ENCODE measurements at regions of chr12 and their contacts with region 1.

Region 1: GRCh38 chr12:120356567-120357030 is 12.4 kb downstream of the MSI1 start:
- DNase-seq: no peak
- H3K4me3 ChIP-seq: peak overlapping the region in 1 of 4 donors; percentile 39
- H3K27ac ChIP-seq: no peak overlapping the region
- H3K4me1 ChIP-seq: peaks cover 0 to 11% (median 5%) of the 10 kb centered on the region in 3 donors
- H3K27me3 ChIP-seq: peaks cover 0 to 6% (median 0%) of the 10 kb centered on the region in 4 donors
- CTCF ChIP-seq: peak; percentile 73 to 89 (median 84)
- POLR2A ChIP-seq: no peak

Region 2: DNA sequence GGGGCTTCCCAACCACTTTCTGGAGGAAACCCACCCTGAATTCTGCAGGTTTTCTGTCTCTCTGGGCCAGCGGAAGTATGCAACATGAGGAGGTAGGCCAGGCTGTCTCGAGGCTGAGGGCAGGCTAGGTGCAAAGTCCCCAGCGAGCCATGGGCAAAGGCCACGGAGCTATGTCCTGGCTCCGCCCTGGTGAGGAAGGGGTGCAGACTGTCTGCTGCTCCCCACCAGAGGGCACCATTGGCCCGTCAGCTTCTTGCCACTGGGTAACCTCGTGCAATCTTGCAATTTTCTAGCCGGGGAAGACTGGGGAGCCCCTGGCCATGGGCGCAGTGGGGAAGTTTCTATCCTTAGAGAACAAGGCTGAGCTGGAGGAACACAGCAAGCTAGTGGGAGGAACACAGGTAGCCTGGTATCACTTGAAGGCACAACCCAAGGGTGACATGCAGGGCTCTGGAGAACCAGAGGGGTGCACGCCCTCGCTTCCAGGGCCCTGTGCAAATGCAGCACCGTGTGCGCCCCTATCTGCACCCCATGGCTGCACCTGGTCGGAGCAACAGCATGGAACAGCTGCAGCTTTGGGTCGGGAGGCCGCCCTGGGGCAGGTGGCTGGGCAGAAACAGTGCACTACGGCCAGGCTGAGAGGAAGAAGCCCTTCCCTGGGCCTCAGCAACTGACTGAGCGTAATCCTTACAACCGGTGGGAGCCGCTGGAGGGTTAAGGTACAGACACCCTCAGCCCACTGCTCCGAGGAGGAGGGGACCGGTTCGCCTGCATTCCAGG is 128.1 kb before region 1 on chr12:
- intact Hi-C with region 1: no loop called
- DNase-seq: peak; percentile 30
- H3K4me3 ChIP-seq: peak overlapping the region in 1 of 4 donors; percentile 25
- H3K27ac ChIP-seq: peak overlapping the region; percentile 74 to 94 (median 84)
- H3K4me1 ChIP-seq: peaks cover 72 to 98% (median 88%) of the 10 kb centered on the region in 3 donors
- H3K27me3 ChIP-seq: no peaks in the 10 kb centered on the region
- CTCF ChIP-seq: peak; percentile 84 to 97 (median 94)
- POLR2A ChIP-seq: no peak

Region 3: DNA sequence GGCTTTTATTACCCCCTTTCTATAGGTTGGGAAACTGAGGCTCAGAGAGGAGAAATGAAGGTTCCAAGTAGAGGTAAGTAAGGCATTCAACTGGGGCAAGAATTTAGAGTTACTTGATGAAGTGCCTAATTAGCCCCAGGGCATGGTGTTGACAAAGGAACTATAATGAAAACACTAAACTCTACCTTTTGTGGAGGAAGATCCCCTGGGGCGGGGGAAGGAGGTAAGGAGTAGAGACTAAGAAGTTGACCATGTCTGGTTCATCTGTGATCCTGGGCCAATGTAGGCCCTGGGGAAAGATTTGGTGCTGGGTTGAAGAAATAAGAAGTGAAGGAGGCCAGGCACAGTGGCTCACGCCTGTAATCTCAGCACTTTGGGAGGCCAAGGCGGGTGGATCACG is 65.1 kb after region 1 on chr12:
- intact Hi-C with region 1: no loop called
- DNase-seq: no peak
- H3K4me3 ChIP-seq: no peak overlapping the region
- H3K27ac ChIP-seq: no peak overlapping the region
- H3K4me1 ChIP-seq: no peaks in the 10 kb centered on the region
- H3K27me3 ChIP-seq: no peaks in the 10 kb centered on the region
- CTCF ChIP-seq: no peak
- POLR2A ChIP-seq: no peak

Region 4: GRCh38 chr12:120432772-120433525 is 76.3 kb after region 1 on chr12:
- intact Hi-C with region 1: loop called (anchors 5 kb)
- DNase-seq: no peak
- H3K4me3 ChIP-seq: no peak overlapping the region
- H3K27ac ChIP-seq: no peak overlapping the region
- H3K4me1 ChIP-seq: peaks cover 0 to 14% (median 0%) of the 10 kb centered on the region in 3 donors
- H3K27me3 ChIP-seq: peaks cover 0 to 7% (median 0%) of the 10 kb centered on the region in 4 donors
- CTCF ChIP-seq: no peak
- POLR2A ChIP-seq: no peak